ENCODE measurements at regions of chr12 and their contacts with region 1.

Region 1: GRCh38 chr12:123232807-123233543 is at the starts of genes MPHOSPH9 and MTRFR:
- DNase-seq: peak; percentile 100
- H3K4me3 ChIP-seq: peak within 1 kb of the TSS; percentile 65 to 100 (median 99)
- H3K27ac ChIP-seq: peak within 1 kb of the TSS; percentile 86
- H3K4me1 ChIP-seq: peaks cover 21% of the 10 kb centered on the region
- H3K27me3 ChIP-seq: no peaks in the 10 kb centered on the region
- CTCF ChIP-seq: no peak
- POLR2A ChIP-seq: peak; percentile 99
- total RNA-seq, gene MPHOSPH9: 42.4 and 55.6 TPM in 2 replicates
- total RNA-seq, gene MTRFR: 12.0 and 14.4 TPM in 2 replicates

Region 2: DNA sequence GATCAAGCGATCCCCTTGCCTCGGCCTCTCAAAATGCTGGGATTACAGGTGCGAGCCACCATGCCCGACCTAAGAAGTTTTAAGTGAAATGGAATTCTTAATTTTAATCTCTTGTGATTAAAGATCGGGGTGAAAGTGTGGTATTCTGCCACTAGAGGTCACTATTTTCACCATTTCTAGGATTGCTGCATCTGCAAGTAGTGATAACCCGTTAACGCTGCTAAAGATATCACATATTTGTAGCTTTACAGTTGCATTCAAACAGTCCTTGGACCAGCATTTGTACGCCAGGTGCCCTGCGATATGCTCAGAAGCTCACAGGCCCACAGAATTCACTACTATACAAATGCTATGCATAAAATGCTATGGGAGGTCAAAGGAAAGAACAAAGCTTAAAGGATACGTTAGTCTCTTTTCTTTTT is 439.3 kb before region 1 on chr12:
- CTCF ChIA-PET with region 1: interaction called, 21 read pairs
- POLR2A ChIA-PET with region 1: no interaction called
- dilution Hi-C with region 1: no loop called
- intact Hi-C with region 1: no loop called
- DNase-seq: peak; percentile 75
- H3K4me3 ChIP-seq: no peak overlapping the region
- H3K27ac ChIP-seq: no peak overlapping the region
- H3K4me1 ChIP-seq: no peaks in the 10 kb centered on the region
- H3K27me3 ChIP-seq: no peaks in the 10 kb centered on the region
- CTCF ChIP-seq: peak; percentile 41 to 57
- POLR2A ChIP-seq: no peak

Region 3: DNA sequence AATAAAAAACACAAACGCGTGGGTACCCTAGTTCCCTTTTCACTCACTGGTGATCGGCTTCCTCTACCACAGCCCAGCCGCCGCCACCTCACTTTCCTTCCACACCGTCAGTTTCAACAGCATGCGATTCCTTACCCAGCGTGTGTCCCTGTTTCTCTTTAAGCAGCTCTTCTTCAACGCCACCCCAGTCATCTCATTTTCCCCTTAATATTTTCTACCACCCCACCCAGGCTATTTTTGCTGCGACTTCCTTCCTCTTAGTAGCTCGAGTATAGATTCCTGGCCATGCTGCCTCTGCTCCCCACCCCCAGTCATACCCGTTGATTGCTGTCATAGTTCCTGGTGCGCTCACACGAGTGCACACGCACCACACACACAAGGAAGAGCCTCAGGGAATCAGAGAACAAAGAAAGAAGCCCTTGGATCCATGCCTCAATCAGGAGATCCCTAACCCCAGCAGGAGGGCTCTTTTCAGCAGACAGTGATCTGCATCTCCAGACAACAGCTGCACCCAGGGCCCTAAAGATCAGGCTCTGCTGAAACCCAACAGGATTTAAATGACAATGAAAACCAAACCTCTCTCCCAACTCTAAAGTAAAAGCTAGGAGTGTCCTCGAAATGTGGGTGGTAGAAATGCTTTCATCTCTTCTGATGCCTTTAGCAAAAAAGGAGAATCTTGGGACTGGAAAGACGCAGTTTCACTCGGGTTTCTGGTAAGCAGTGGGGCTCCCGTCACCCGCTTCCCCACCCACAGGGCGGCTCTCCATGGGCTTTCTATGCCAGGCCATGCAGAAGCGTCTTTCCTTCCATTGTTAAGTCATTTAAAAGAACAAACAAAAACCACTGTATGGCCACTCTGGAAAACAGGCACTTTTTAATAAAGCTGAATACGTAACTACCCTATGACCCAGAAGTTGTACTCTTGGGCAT is 360.9 kb before region 1 on chr12:
- CTCF ChIA-PET with region 1: interaction called, 15 read pairs
- POLR2A ChIA-PET with region 1: interaction called, 5 read pairs
- dilution Hi-C with region 1: no loop called
- intact Hi-C with region 1: loop called (anchors 5 kb)
- DNase-seq: peak; percentile 84
- H3K4me3 ChIP-seq: peak overlapping the region in 2 of 3 experiments; percentile 25 to 60
- H3K27ac ChIP-seq: peak overlapping the region; percentile 92
- H3K4me1 ChIP-seq: peaks cover 32% of the 10 kb centered on the region
- H3K27me3 ChIP-seq: no peaks in the 10 kb centered on the region
- CTCF ChIP-seq: no peak
- POLR2A ChIP-seq: no peak

Region 4: GRCh38 chr12:122958198-122958888 is 274.6 kb before region 1 on chr12:
- CTCF ChIA-PET with region 1: interaction called, 14 read pairs
- POLR2A ChIA-PET with region 1: interaction called, 6 read pairs
- dilution Hi-C with region 1: no loop called
- intact Hi-C with region 1: loop called (anchors 2 kb)
- DNase-seq: peak; percentile 98
- H3K4me3 ChIP-seq: no peak overlapping the region
- H3K27ac ChIP-seq: peak overlapping the region; percentile 80
- H3K4me1 ChIP-seq: peaks cover 12% of the 10 kb centered on the region
- H3K27me3 ChIP-seq: no peaks in the 10 kb centered on the region
- CTCF ChIP-seq: no peak
- POLR2A ChIP-seq: peak; percentile 38

Region 5: DNA sequence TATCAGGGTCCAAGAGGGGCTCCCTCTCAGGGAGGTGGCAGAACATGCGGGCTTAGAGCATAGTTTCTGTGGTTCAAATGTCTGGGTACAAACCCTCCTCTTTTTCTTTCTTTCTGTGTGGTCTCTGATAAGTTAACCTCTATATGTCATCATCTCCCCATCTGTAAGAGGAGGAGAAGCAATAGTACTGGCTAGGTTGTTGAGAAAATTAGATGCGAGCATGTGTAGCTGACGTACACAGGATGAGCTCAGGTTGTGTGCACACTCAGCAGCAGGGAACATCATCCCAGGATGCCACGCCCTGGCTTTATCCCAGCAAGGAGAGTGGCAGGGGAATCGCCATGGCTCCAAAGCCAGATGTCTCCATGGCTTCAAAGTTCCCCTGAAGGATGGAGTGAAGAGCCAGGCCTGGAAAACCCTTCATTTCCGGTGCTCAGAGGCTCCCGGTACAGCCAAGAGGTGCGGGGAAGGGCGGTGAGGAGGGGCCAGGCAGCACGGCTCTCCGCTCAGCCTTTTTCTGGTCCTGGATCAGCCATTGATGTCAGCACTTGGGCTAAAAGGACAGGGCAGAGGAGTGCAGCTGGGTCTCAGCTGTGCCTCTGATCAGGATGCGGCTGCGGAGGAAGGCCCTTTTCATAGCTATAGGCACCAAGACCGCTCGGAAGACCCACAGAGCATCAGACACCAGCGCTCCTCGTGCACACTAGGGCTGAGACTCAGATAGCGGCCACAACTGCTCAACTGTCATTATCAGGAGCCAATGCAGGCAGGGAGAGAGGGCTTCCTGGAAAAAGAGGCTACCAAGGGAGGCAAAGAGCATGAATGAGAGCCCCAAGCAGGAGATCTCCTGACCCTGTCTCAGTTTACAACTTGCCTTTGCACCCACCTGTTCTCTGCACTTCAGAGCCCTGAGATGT is 211.0 kb before region 1 on chr12:
- CTCF ChIA-PET with region 1: interaction called, 10 read pairs
- POLR2A ChIA-PET with region 1: no interaction called
- dilution Hi-C with region 1: no loop called
- intact Hi-C with region 1: no loop called
- DNase-seq: no peak
- H3K4me3 ChIP-seq: no peak overlapping the region
- H3K27ac ChIP-seq: no peak overlapping the region
- H3K4me1 ChIP-seq: peaks cover 3% of the 10 kb centered on the region
- H3K27me3 ChIP-seq: no peaks in the 10 kb centered on the region
- CTCF ChIP-seq: no peak
- POLR2A ChIP-seq: no peak

Region 6: DNA sequence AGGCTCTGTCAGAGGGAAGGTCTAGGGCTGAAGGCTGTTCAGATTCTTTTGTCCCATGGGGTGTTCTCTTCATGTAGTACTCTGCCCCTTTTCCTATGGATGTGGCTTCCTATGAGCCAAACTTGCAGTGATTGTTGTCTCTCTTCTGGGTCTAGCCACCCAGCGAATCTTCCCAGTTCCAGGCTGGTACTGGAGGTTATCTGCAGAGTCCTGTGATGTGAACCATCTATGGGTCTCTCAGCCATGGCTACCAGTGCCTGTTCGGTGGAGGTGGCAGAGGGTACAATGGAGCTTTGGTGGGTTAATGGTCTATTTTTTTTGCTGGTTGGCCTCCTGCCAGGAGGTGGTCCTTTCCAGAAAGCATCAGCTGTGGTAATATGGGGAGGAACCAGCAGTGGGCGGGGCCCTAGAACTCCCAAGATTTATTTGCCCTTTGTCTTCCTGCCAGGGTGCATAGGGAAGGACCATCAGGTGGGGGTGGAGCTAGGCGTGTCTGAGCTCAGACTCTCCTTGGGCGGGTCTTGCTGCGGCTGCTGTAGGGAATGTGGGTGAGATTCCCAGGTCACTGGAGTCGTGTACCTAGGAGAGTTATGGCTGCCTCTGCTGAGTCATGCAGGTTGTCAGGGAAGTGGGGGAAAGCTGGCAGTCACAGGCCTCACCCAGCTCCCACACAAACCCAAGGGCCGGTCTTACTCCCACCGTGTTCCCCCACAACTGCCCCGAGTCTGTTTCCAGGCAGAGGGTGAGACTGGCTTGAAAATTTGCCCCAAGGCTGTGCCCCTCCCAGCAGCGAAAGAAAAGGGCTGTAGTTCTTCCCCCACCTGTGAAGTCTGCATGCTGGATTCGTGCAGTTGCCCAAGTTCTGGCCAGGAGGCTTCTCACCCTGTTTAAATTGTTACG is 17.8 kb after region 1 on chr12:
- CTCF ChIA-PET with region 1: interaction called, 15 read pairs
- POLR2A ChIA-PET with region 1: interaction called, 4 read pairs
- dilution Hi-C with region 1: no loop called
- intact Hi-C with region 1: no loop called
- DNase-seq: no peak
- H3K4me3 ChIP-seq: no peak overlapping the region
- H3K27ac ChIP-seq: no peak overlapping the region
- H3K4me1 ChIP-seq: no peaks in the 10 kb centered on the region
- H3K27me3 ChIP-seq: no peaks in the 10 kb centered on the region
- CTCF ChIP-seq: no peak
- POLR2A ChIP-seq: no peak

Region 7: DNA sequence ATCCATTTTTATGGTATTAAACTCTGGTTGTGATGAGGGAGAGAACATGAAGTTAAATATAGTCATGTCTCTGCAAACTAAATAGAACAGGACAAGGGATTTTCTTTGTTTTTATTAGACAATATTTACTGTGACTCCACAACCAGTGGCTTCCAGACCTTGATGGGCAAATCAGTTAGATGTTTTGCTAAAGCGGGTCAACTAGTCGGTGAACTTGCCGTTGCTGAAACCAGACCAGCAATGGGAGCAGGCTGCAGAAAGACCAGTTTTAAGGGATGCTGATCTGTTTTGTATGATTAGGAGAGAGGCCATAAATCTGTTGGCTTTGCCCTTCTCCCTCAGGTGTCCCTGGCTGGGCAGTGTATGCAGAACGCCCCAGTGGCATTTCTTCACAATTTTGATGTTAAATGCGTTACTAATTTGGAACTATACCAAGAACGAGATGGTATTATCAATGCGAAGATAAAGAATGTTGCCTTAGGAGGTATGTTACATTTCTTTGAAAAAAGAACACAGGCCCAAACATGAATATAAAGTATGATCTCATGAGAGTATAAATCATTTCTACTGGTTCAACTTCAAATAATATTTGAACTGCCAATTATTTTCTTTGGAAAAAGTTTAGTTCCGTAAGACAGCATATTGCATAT is 457.3 kb after region 1 on chr12:
- CTCF ChIA-PET with region 1: no interaction called
- POLR2A ChIA-PET with region 1: no interaction called
- dilution Hi-C with region 1: no loop called
- intact Hi-C with region 1: no loop called
- DNase-seq: no peak
- H3K4me3 ChIP-seq: no peak overlapping the region
- H3K27ac ChIP-seq: no peak overlapping the region
- H3K4me1 ChIP-seq: no peaks in the 10 kb centered on the region
- H3K27me3 ChIP-seq: no peaks in the 10 kb centered on the region
- CTCF ChIP-seq: no peak
- POLR2A ChIP-seq: no peak

Measured in endothelial cell of umbilical vein (primary cell).